ENCODE measurements at regions of chr16 and their contacts with region 1.

Region 1: GRCh38 chr16:73546349-73546845 is 498.5 kb upstream of the ZFHX3 start:
- DNase-seq: no peak
- ATAC-seq: no peak
- H3K4me3 ChIP-seq: no peak overlapping the region
- H3K27ac ChIP-seq: no peak overlapping the region
- H3K4me1 ChIP-seq: no peaks in the 10 kb centered on the region
- H3K27me3 ChIP-seq: peaks cover 60% of the 10 kb centered on the region
- CTCF ChIP-seq: no peak

Region 2: GRCh38 chr16:73232555-73233328 is 313.7 kb before region 1 on chr16:
- intact Hi-C with region 1: no loop called
- DNase-seq: no peak
- ATAC-seq: no peak
- H3K4me3 ChIP-seq: peak overlapping the region; percentile 10
- H3K27ac ChIP-seq: no peak overlapping the region
- H3K4me1 ChIP-seq: peaks cover 4% of the 10 kb centered on the region
- H3K27me3 ChIP-seq: no peaks in the 10 kb centered on the region
- CTCF ChIP-seq: no peak

Region 3: DNA sequence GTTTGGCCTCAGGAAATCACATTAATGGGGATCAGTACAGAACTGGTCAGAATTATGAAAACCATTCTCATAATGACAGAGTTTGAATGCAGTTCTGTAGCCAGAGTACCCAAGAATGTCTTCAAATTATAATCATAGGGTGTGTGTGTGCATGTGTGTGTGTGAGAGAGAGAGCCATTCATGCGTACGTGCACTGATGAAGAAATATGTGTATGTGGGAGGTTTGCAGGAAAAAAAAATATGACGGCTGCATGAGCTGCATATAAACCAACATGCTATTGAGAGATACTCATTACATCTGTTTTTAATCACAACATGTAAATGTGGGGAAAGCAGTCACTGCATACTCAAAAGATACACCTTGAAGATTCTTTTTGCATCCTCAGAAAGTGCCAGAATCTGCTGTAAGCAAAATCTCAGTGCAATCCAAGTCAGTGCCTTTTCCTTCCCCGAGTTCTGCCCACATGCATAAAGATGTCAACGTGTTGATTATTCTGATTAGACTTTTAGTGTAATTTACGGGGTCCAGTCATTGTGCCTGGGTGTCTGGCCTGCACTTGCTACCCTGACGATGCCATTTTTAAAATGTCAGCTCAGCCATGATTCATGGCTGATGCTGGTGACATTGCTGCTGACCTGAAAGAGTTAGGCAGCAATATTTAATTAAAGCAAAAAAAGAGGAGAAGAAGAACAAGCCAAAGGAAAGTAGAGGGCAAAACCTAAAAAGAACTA is 119.8 kb before region 1 on chr16:
- intact Hi-C with region 1: no loop called
- DNase-seq: no peak
- ATAC-seq: no peak
- H3K4me3 ChIP-seq: no peak overlapping the region
- H3K27ac ChIP-seq: no peak overlapping the region
- H3K4me1 ChIP-seq: no peaks in the 10 kb centered on the region
- H3K27me3 ChIP-seq: no peaks in the 10 kb centered on the region
- CTCF ChIP-seq: no peak

Region 4: DNA sequence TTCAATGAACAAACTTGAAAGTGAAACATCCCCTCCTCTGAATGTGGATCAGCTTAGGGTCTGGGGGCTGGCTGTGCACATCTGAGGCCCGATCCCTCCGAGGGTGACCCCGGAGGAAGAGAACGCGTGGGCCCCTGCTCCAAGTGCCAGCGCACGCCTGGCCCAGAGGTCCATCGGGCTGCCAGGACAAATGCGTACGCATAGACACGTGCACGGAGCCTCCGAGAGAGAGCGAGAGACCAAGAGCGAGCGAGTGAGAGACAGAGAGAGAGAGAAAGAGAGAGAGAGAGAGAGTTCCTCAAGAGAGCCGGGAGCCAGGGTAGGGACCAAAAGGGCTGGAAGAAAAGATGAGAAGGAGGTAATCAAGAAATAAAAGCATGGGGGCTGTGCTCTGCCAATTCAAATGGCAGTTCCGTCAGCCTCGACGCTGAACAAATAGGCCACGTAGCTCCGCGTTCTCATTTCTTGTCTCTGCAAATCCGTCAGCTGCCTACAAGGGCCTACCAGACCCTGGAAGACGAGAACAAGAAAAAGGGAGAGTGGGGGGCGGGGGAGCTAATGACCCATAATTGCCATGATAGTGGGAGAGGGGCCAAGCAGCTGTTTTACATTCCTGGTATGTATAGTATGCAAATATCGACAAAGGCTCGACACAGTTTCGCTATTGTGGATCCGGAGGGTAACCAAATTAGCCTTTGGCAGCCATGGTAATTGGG is 63.2 kb before region 1 on chr16:
- intact Hi-C with region 1: loop called (anchors 10 kb)
- DNase-seq: no peak
- ATAC-seq: no peak
- H3K4me3 ChIP-seq: no peak overlapping the region
- H3K27ac ChIP-seq: no peak overlapping the region
- H3K4me1 ChIP-seq: no peaks in the 10 kb centered on the region
- H3K27me3 ChIP-seq: peaks cover 5% of the 10 kb centered on the region
- CTCF ChIP-seq: no peak

Region 5: GRCh38 chr16:73616166-73616753 is 69.9 kb after region 1 on chr16:
- intact Hi-C with region 1: no loop called
- DNase-seq: no peak
- ATAC-seq: no peak
- H3K4me3 ChIP-seq: no peak overlapping the region
- H3K27ac ChIP-seq: no peak overlapping the region
- H3K4me1 ChIP-seq: no peaks in the 10 kb centered on the region
- H3K27me3 ChIP-seq: peaks cover 9% of the 10 kb centered on the region
- CTCF ChIP-seq: no peak

Region 6: GRCh38 chr16:74252329-74252728 is 705.9 kb after region 1 on chr16:
- intact Hi-C with region 1: no loop called
- DNase-seq: no peak
- ATAC-seq: no peak
- H3K4me3 ChIP-seq: no peak overlapping the region
- H3K27ac ChIP-seq: no peak overlapping the region
- H3K4me1 ChIP-seq: no peaks in the 10 kb centered on the region
- H3K27me3 ChIP-seq: no peaks in the 10 kb centered on the region
- CTCF ChIP-seq: no peak